IMR-90 (cell line): ENCODE measurements at regions of chr22 and their contacts with region 1.

Region 1: GRCh38 chr22:30289134-30289979 is at the start of gene CASTOR1:
- DNase-seq: peak; percentile 97
- ATAC-seq: peak; percentile 91
- H3K4me3 ChIP-seq: peak within 1 kb of the TSS; percentile 90
- H3K27ac ChIP-seq: peak within 1 kb of the TSS; percentile 57
- H3K4me1 ChIP-seq: peaks cover 20% of the 10 kb centered on the region; the same call in 1 of the 2 replicates
- H3K27me3 ChIP-seq: no peaks in the 10 kb centered on the region
- CTCF ChIP-seq: no peak
- POLR2A ChIP-seq: no peak; the same call in 1 of the 2 replicates
- RAD21 ChIP-seq: no peak
- total RNA-seq, gene CASTOR1: 10.6 and 11.7 TPM in 2 replicates

Region 2: DNA sequence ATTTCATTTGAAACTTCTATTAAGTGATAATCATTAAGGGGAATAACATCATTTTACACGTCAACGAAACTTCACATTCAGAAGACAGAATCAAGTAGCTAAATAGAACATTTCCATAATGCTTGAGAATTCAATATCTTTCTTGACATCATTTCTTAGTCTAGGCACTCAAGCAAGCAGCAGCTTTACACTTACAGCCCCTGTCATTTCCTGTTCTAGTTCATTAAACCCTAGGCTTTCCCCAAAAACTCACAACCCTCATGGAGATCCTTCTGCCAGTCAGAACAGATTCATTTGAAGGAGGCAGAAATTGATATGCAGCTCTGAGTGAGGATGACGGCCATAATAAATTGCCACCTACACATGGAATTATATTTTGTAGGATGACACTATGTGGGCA is 214.4 kb before region 1 on chr22:
- CTCF ChIA-PET with region 1: no interaction called
- POLR2A ChIA-PET with region 1: no interaction called
- dilution Hi-C with region 1: no loop called
- in situ Hi-C with region 1: no loop called
- intact Hi-C with region 1: no loop called
- DNase-seq: no peak
- ATAC-seq: no peak
- H3K4me3 ChIP-seq: no peak overlapping the region
- H3K27ac ChIP-seq: no peak overlapping the region
- H3K4me1 ChIP-seq: peaks cover 2% of the 10 kb centered on the region; the same call in 1 of the 2 replicates
- H3K27me3 ChIP-seq: peaks cover 24% of the 10 kb centered on the region
- CTCF ChIP-seq: no peak
- POLR2A ChIP-seq: no peak
- RAD21 ChIP-seq: no peak

Region 3: GRCh38 chr22:30235687-30236170 is 53.6 kb before region 1 on chr22:
- CTCF ChIA-PET with region 1: no interaction called
- POLR2A ChIA-PET with region 1: no interaction called
- dilution Hi-C with region 1: no loop called
- in situ Hi-C with region 1: no loop called
- intact Hi-C with region 1: no loop called
- DNase-seq: peak; percentile 88
- ATAC-seq: peak; percentile 61
- H3K4me3 ChIP-seq: no peak overlapping the region
- H3K27ac ChIP-seq: peak overlapping the region; percentile 91
- H3K4me1 ChIP-seq: peaks cover 35% of the 10 kb centered on the region
- H3K27me3 ChIP-seq: no peaks in the 10 kb centered on the region
- CTCF ChIP-seq: no peak
- POLR2A ChIP-seq: no peak
- RAD21 ChIP-seq: no peak

Region 4: DNA sequence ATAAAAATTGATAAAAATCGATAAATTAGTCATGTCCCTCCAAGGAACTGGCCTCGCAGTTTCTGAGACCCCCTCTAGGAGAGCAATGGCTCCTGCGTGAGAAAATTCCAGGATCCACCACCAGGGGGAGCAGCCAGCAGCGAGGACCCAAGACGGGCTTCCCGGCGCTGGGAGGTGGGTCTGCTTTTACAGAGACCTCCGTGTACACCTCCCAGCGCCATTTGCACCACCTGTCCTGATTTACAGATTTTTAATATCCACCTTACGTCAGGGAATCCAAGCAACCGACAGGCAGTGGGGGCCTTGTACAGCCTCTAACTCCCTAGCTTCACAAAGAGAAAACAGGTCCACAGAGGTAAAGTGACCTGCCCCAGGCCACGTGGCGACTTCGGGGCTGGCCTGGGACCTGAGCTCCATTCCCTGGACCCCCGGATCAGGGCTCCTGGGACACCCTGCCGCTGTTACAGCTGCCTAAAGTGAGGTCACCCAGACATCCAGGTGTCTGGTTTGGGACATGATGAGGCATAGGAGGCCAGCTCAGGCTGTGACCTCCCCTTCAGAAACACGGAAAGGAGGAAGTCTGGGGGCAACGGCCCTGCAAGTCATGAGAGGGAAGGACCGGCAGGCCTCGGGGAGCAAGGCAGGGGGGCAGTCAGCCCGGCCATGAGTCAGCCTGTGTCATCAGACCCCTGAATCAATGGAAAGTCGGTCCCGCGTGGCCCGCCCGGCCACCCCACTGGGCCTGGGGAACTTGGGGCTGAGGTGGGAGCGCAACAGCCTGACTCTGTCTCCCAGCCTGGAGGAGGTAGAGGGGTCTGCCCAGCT is 26.2 kb before region 1 on chr22:
- CTCF ChIA-PET with region 1: interaction called, 5 read pairs
- POLR2A ChIA-PET with region 1: no interaction called
- dilution Hi-C with region 1: no loop called
- in situ Hi-C with region 1: no loop called
- intact Hi-C with region 1: loop called (anchors 1 kb)
- DNase-seq: peak; percentile 61
- ATAC-seq: peak; percentile 87
- H3K4me3 ChIP-seq: peak overlapping the region; percentile 26; the same call in 1 of the 2 replicates
- H3K27ac ChIP-seq: no peak overlapping the region
- H3K4me1 ChIP-seq: peaks cover 6% of the 10 kb centered on the region; the same call in 1 of the 2 replicates
- H3K27me3 ChIP-seq: no peaks in the 10 kb centered on the region; the same call in 1 of the 2 replicates
- CTCF ChIP-seq: peak; percentile 91
- POLR2A ChIP-seq: no peak
- RAD21 ChIP-seq: peak; percentile 72

Region 5: GRCh38 chr22:30326706-30327362 is 37.5 kb after region 1 on chr22 and contains the start of gene TBC1D10A:
- CTCF ChIA-PET with region 1: interaction called, 9 read pairs
- POLR2A ChIA-PET with region 1: interaction called, 3 read pairs
- dilution Hi-C with region 1: no loop called
- in situ Hi-C with region 1: no loop called
- intact Hi-C with region 1: loop called (anchors 2 kb)
- DNase-seq: peak; percentile 86
- ATAC-seq: peak; percentile 92
- H3K4me3 ChIP-seq: peak within 1 kb of the TSS; percentile 97
- H3K27ac ChIP-seq: peak within 1 kb of the TSS; percentile 91
- H3K4me1 ChIP-seq: peaks cover 26% of the 10 kb centered on the region
- H3K27me3 ChIP-seq: no peaks in the 10 kb centered on the region
- CTCF ChIP-seq: no peak
- POLR2A ChIP-seq: peak; percentile 94
- RAD21 ChIP-seq: no peak
- total RNA-seq, gene TBC1D10A: 16.3 and 18.9 TPM in 2 replicates

Region 6: GRCh38 chr22:30356449-30357235 is 67.3 kb after region 1 on chr22 and contains the starts of genes CCDC157 and SF3A1:
- CTCF ChIA-PET with region 1: no interaction called
- POLR2A ChIA-PET with region 1: no interaction called
- dilution Hi-C with region 1: no loop called
- in situ Hi-C with region 1: no loop called
- intact Hi-C with region 1: loop called (anchors 2 kb)
- DNase-seq: peak; percentile 91
- ATAC-seq: peak; percentile 97
- H3K4me3 ChIP-seq: peak within 1 kb of the TSS; percentile 98
- H3K27ac ChIP-seq: peak within 1 kb of the TSS; percentile 98
- H3K4me1 ChIP-seq: peaks cover 12% of the 10 kb centered on the region
- H3K27me3 ChIP-seq: no peaks in the 10 kb centered on the region
- CTCF ChIP-seq: no peak
- POLR2A ChIP-seq: peak; percentile 92
- RAD21 ChIP-seq: no peak
- total RNA-seq, gene CCDC157: 0.83 and 0.90 TPM in 2 replicates
- total RNA-seq, gene SF3A1: 36.9 and 49.7 TPM in 2 replicates